Tibial artery (tissue), 4 donors: ENCODE measurements at regions of chr22 and their contacts with region 1.

Region 1: GRCh38 chr22:41940832-41941765 is 5.9 kb downstream of the CENPM start:
- DNase-seq: peak; percentile 85 to 89
- H3K4me3 ChIP-seq: no peak overlapping the region
- H3K27ac ChIP-seq: peak overlapping the region in 1 of 2 donors; percentile 25
- H3K4me1 ChIP-seq: peaks cover 0 to 11% (median 6%) of the 10 kb centered on the region in 4 donors
- H3K27me3 ChIP-seq: peaks cover 0 to 3% of the 10 kb centered on the region in 2 donors
- CTCF ChIP-seq: peak; percentile 97

Region 2: GRCh38 chr22:41697126-41697775 is 243.8 kb before region 1 on chr22:
- intact Hi-C with region 1: loop called (anchors 2 kb)
- DNase-seq: peak; percentile 91 to 92
- H3K4me3 ChIP-seq: peak overlapping the region in 1 of 2 donors; percentile 28
- H3K27ac ChIP-seq: no peak overlapping the region
- H3K4me1 ChIP-seq: peaks cover 0 to 18% (median 13%) of the 10 kb centered on the region in 4 donors
- H3K27me3 ChIP-seq: peaks cover 0 to 10% of the 10 kb centered on the region in 2 donors
- CTCF ChIP-seq: peak; percentile 92 to 97

Region 3: DNA sequence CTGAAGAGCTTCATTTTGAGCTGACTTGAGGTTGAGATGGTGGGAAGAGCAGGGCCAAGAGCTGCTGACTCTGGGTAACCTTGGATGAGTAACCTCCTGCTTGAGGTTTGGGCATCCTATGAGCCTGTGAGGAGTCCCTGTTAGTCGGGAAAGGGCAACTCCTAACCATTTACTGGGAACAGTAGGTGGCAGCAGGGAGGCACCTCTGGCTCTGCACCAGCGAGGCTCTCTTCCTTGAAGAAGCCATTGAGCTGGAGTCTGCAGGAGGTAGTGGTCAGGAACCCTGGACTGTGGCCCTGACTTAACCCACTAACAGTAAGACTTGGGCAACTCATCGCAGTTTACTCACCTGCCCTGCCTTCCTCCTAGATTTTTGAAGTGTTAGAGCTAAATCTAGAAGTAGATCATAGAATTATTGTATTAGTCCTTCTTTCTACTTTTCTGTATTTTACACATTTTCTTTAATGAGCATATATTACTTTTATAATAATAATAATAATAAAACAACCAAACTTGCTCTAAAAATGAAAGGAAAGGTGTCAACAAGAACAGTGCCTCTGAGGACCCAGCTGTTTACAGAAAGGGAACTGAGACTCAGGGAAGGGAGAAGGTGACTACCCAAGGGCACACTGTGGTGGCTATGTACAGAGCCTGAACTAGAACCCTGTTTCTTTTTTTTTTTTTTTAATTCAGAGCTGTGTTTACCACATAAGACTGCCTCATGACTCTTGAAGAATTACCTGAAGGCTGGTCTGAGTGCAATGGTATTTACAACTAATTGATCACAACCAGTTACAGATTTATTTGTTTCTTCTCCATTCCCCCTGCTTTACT is 194.3 kb before region 1 on chr22:
- intact Hi-C with region 1: loop called (anchors 2 kb)
- DNase-seq: peak; percentile 63 to 77
- H3K4me3 ChIP-seq: no peak overlapping the region
- H3K27ac ChIP-seq: no peak overlapping the region
- H3K4me1 ChIP-seq: no peaks in the 10 kb centered on the region
- H3K27me3 ChIP-seq: peaks cover 0 to 22% of the 10 kb centered on the region in 2 donors
- CTCF ChIP-seq: peak; percentile 67 to 71

Region 4: DNA sequence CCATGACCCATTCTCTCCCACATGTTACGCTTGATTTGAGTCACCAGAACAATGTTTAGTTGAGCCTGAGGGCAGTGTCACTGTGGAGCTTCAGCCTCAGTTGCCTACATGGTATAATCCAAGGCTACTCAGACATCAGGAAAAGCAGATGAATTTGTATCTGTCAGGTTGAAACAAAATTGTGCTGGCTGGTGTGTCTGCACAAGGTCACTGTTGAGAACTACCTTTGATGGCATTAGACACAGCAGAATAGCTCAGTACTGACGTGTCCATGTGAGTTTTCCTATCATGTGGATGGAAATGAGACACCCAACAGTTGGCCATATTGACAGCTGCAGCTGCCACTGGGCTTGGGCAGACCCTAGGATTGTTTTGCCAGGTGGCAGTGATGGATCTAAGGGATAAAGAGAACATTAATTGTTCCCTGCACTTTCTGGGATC is 124.9 kb before region 1 on chr22:
- intact Hi-C with region 1: no loop called
- DNase-seq: no peak
- H3K4me3 ChIP-seq: no peak overlapping the region
- H3K27ac ChIP-seq: no peak overlapping the region
- H3K4me1 ChIP-seq: no peaks in the 10 kb centered on the region
- H3K27me3 ChIP-seq: no peaks in the 10 kb centered on the region
- CTCF ChIP-seq: no peak

Region 5: GRCh38 chr22:41983513-41984405 is 42.7 kb after region 1 on chr22:
- intact Hi-C with region 1: no loop called
- DNase-seq: no peak
- H3K4me3 ChIP-seq: no peak overlapping the region
- H3K27ac ChIP-seq: no peak overlapping the region
- H3K4me1 ChIP-seq: no peaks in the 10 kb centered on the region
- H3K27me3 ChIP-seq: peaks cover 0 to 17% of the 10 kb centered on the region in 2 donors
- CTCF ChIP-seq: no peak

Region 6: GRCh38 chr22:42090596-42091454 is 149.7 kb after region 1 on chr22 and contains the start of gene NDUFA6:
- intact Hi-C with region 1: no loop called
- DNase-seq: peak; percentile 99
- H3K4me3 ChIP-seq: peak within 1 kb of the TSS; percentile 60 to 73
- H3K27ac ChIP-seq: peak within 1 kb of the TSS; percentile 80 to 91
- H3K4me1 ChIP-seq: peaks cover 0 to 33% (median 9%) of the 10 kb centered on the region in 4 donors
- H3K27me3 ChIP-seq: no peaks in the 10 kb centered on the region
- CTCF ChIP-seq: peak; percentile 86 to 96